Activated CD4-positive, alpha-beta memory T cell treated with anti-CD3 and anti-CD28 coated beads for 36 hours (primary cell): ENCODE measurements at regions of chr18 and their contacts with region 1.

Region 1: GRCh38 chr18:23231340-23232021 is 96.2 kb downstream of the CABLES1 start:
- DNase-seq: peak; percentile 87
- H3K4me3 Mint-ChIP-seq: peak overlapping the region; percentile 40
- H3K27ac Mint-ChIP-seq: peak overlapping the region; percentile 85
- H3K4me1 Mint-ChIP-seq: peaks cover 51% of the 10 kb centered on the region
- H3K27me3 Mint-ChIP-seq: peaks cover 3% of the 10 kb centered on the region

Region 2: GRCh38 chr18:22933206-22933957 is 298.1 kb before region 1 on chr18 and contains the start of gene RBBP8:
- CTCF ChIA-PET with region 1: interaction called, 3 read pairs
- POLR2A ChIA-PET with region 1: no interaction called
- intact Hi-C with region 1: loop called (anchors 1 kb)
- DNase-seq: peak; percentile 85
- H3K4me3 Mint-ChIP-seq: peak within 1 kb of the TSS; percentile 88
- H3K27ac Mint-ChIP-seq: peak within 1 kb of the TSS; percentile 93
- H3K4me1 Mint-ChIP-seq: peaks cover 18% of the 10 kb centered on the region
- H3K27me3 Mint-ChIP-seq: no peaks in the 10 kb centered on the region
- total RNA-seq, gene RBBP8: 62.5 to 65.3 TPM

Region 3: DNA sequence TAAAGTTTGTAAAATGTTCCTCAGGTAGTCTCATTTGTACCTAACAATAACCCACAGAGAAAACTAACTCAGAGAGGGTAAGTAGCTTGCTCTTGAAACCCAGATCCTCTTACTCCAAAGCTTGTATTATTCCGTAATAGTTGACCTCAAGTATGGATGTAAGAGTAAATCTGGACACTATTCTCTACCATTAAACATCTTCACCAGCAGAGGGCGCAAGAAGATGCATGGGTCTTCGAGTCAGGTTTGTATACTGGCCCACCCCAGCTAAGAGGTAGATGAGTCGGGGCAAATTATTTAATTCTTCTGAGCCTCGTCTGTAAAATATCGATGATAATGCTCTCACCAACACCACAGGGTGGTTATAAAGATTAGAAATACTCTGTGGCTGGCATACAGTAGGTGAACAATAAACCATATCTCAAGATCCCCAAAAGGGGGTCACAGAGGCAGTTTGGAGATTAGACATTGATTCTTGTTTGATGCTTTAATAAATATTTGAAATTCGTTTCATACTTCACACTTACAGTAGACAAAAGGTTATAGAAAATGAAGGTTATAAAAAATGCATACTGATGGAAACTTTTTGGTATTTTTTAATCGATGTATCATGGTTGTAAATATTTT is 99.7 kb before region 1 on chr18:
- CTCF ChIA-PET with region 1: interaction called, 3 read pairs
- POLR2A ChIA-PET with region 1: interaction called, 3 read pairs
- intact Hi-C with region 1: loop called (anchors 2 kb)
- DNase-seq: peak; percentile 55
- H3K4me3 Mint-ChIP-seq: peak overlapping the region; percentile 8
- H3K27ac Mint-ChIP-seq: no peak overlapping the region
- H3K4me1 Mint-ChIP-seq: peaks cover 14% of the 10 kb centered on the region
- H3K27me3 Mint-ChIP-seq: peaks cover 25% of the 10 kb centered on the region

Region 4: DNA sequence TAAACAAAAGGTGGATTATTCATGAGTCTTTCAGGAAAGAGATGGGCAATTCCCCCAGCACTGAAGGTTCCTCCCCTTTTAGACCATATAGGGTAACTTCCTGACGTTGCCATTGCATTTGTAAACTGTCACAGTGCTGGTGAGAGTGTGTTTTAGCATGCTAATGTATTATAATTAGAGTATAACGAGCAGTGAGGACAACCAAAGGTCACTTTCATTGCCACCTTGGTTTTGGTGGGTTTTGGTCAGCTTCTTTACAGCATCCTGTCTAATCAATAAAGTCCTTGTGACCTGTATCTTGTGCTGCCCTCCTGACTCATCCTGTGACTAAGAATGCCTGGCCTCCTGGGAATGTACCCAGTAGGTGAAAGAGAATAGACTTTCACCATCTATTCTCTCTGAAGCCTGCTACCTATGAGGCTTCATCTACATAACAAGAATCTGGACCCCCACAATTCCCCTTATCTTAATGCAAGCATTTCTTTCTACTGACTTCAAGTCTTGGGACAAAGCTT is 52.5 kb after region 1 on chr18:
- CTCF ChIA-PET with region 1: no interaction called
- POLR2A ChIA-PET with region 1: no interaction called
- intact Hi-C with region 1: loop called (anchors 1 kb)
- DNase-seq: peak; percentile 64
- H3K4me3 Mint-ChIP-seq: no peak overlapping the region
- H3K27ac Mint-ChIP-seq: peak overlapping the region; percentile 63
- H3K4me1 Mint-ChIP-seq: peaks cover 16% of the 10 kb centered on the region
- H3K27me3 Mint-ChIP-seq: no peaks in the 10 kb centered on the region

Region 5: GRCh38 chr18:23377669-23378301 is 146.3 kb after region 1 on chr18:
- CTCF ChIA-PET with region 1: no interaction called
- POLR2A ChIA-PET with region 1: no interaction called
- intact Hi-C with region 1: loop called (anchors 2 kb)
- DNase-seq: no peak
- H3K4me3 Mint-ChIP-seq: no peak overlapping the region
- H3K27ac Mint-ChIP-seq: peak overlapping the region; percentile 28
- H3K4me1 Mint-ChIP-seq: peaks cover 13% of the 10 kb centered on the region
- H3K27me3 Mint-ChIP-seq: no peaks in the 10 kb centered on the region

Region 6: GRCh38 chr18:23958036-23958435 is 726.6 kb after region 1 on chr18:
- CTCF ChIA-PET with region 1: no interaction called
- POLR2A ChIA-PET with region 1: no interaction called
- intact Hi-C with region 1: no loop called
- DNase-seq: no peak
- H3K4me3 Mint-ChIP-seq: no peak overlapping the region
- H3K27ac Mint-ChIP-seq: no peak overlapping the region
- H3K4me1 Mint-ChIP-seq: no peaks in the 10 kb centered on the region
- H3K27me3 Mint-ChIP-seq: peaks cover 2% of the 10 kb centered on the region